Natural killer cell (primary cell): ENCODE measurements at regions of chr3 and their contacts with region 1.

Region 1: GRCh38 chr3:57675530-57675929 is 17.3 kb downstream of the DENND6A start:
- DNase-seq: no peak
- ATAC-seq: peak; percentile 54 to 65 (median 58)
- H3K4me3 ChIP-seq: no peak overlapping the region
- H3K4me3 Mint-ChIP-seq: peak overlapping the region; percentile 75
- H3K27ac ChIP-seq: peak overlapping the region; percentile 43
- H3K27ac Mint-ChIP-seq: peak overlapping the region; percentile 85 to 87
- H3K4me1 ChIP-seq: peaks cover 40% of the 10 kb centered on the region
- H3K4me1 Mint-ChIP-seq: peaks cover 68 to 70% of the 10 kb centered on the region in 2 donors
- H3K27me3 ChIP-seq: no peaks in the 10 kb centered on the region
- H3K27me3 Mint-ChIP-seq: no peaks in the 10 kb centered on the region
- CTCF ChIP-seq: no peak

Region 2: GRCh38 chr3:56783644-56784447 is 891.7 kb before region 1 on chr3:
- intact Hi-C with region 1: loop called (anchors 10 kb)
- DNase-seq: peak; percentile 62 to 85
- ATAC-seq: peak; percentile 84 to 95 (median 94)
- H3K4me3 ChIP-seq: peak overlapping the region; percentile 2
- H3K4me3 Mint-ChIP-seq: peak overlapping the region; percentile 86
- H3K27ac ChIP-seq: peak overlapping the region; percentile 86
- H3K27ac Mint-ChIP-seq: peak overlapping the region; percentile 85 to 92
- H3K4me1 ChIP-seq: peaks cover 87% of the 10 kb centered on the region
- H3K4me1 Mint-ChIP-seq: peaks cover 95 to 97% of the 10 kb centered on the region in 2 donors
- H3K27me3 ChIP-seq: no peaks in the 10 kb centered on the region
- H3K27me3 Mint-ChIP-seq: no peaks in the 10 kb centered on the region
- CTCF ChIP-seq: no peak

Region 3: GRCh38 chr3:57555738-57556458 is 119.6 kb before region 1 on chr3 and contains the start of gene PDE12:
- intact Hi-C with region 1: loop called (anchors 5 kb)
- DNase-seq: peak; percentile 84 to 90
- ATAC-seq: peak; percentile 78 to 88 (median 82)
- H3K4me3 ChIP-seq: peak within 1 kb of the TSS; percentile 76
- H3K4me3 Mint-ChIP-seq: peak within 1 kb of the TSS; percentile 90
- H3K27ac ChIP-seq: peak within 1 kb of the TSS; percentile 94
- H3K27ac Mint-ChIP-seq: peak within 1 kb of the TSS; percentile 93 to 94
- H3K4me1 ChIP-seq: peaks cover 33% of the 10 kb centered on the region
- H3K4me1 Mint-ChIP-seq: peaks cover 42 to 44% of the 10 kb centered on the region in 2 donors
- H3K27me3 ChIP-seq: no peaks in the 10 kb centered on the region
- H3K27me3 Mint-ChIP-seq: no peaks in the 10 kb centered on the region
- CTCF ChIP-seq: no peak
- total RNA-seq, gene PDE12: 34.4 to 36.6 (median 35.5) TPM

Region 4: DNA sequence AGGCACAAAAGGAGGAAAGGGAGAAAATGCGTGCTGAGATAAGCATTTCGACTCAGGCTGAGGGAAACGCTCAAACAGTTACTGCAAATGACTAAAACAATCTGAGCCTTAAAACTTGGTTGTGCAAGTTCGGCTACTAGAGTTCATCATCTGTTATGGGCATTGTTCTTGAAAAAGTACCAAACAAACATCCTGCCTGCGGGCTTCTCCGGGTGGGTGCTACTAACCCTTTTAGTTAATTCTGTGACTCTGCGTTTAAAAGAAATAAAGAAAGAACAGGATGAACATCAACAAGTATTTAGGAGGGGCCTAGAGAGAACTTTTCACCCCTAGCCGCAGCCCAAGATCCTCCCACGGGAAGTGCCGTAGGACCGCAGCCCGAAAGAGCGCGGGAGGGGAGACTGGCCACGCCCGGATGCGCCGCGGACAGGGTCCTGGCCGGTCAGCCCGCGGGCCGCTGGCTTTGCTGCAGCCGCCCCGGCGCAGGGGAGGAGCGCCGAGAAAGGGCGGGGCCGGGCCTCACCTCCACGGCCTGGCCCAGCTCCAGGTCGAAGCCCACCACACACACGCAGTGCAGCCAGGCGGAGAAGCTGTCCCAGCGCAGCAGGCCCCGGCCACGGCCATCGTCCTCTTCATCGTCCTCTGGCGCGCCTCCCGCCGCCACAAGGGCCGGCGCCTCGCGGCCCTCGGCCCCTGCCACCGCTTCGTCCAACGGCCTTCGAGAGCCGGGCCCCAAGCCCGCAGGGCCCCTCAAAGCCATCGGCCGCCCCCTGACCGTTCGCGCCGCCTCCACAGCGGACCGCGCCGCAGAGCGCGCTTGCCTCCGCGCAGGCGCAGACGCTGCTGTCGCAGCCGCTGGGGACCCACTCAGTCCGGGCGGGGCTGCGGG is 17.0 kb after region 1 on chr3 and contains the start of gene DENND6A:
- intact Hi-C with region 1: loop called (anchors 1 kb)
- DNase-seq: peak; percentile 93 to 98
- ATAC-seq: peak; percentile 76 to 90 (median 80)
- H3K4me3 ChIP-seq: peak within 1 kb of the TSS; percentile 60
- H3K4me3 Mint-ChIP-seq: peak within 1 kb of the TSS; percentile 95
- H3K27ac ChIP-seq: peak within 1 kb of the TSS; percentile 88
- H3K27ac Mint-ChIP-seq: peak within 1 kb of the TSS; percentile 94 to 97
- H3K4me1 ChIP-seq: peaks cover 40% of the 10 kb centered on the region
- H3K4me1 Mint-ChIP-seq: peaks cover 22 to 38% of the 10 kb centered on the region in 2 donors
- H3K27me3 ChIP-seq: no peaks in the 10 kb centered on the region
- H3K27me3 Mint-ChIP-seq: no peaks in the 10 kb centered on the region
- CTCF ChIP-seq: no peak
- total RNA-seq, gene DENND6A: 54.5 to 69.8 (median 57.1) TPM

Region 5: DNA sequence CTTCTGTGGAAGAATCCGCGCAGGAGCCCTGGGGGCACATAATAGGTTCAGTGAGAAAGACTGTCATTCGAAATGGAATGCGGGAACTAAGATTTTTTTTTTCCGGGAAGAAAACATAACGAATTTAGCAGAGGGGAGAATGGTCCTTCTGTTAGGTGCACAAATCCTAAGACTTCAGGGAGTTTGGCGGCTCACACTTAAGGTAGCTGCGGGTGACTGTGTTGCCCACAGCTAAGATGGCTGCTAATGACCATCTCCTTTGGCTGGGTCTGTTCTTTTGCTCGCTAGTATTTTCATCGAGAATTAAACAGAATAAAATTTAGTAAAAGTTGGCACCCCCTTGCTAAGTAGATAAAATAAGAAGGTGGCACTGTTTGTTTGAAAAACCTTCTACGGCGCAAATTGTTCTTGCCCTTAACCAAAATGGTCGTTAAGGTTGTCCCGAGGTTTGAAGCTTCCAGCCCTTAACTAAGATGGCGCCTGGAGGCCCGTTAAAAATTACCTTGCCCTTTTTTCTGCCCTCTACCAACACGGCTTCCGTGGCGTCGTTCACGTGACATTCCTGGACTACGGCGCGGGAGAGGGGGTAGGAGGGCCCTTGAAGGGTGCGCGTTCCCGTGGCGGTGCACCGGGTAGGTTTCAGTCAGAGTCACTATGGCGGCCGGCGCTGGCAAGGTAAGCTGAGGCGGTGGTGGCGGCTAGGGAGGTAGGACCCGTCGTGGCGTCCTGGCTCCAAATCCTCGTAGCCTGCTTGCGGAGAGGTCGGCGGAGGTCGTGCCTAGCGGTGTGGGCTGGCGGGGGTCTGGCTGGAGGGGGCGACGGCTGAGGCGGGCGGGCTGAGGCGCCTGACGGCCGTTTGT is 80.4 kb after region 1 on chr3 and contains the start of gene SLMAP:
- intact Hi-C with region 1: loop called (anchors 2 kb)
- DNase-seq: peak; percentile 91 to 98
- ATAC-seq: peak; percentile 92 to 98 (median 93)
- H3K4me3 ChIP-seq: peak within 1 kb of the TSS; percentile 81
- H3K4me3 Mint-ChIP-seq: peak within 1 kb of the TSS; percentile 97
- H3K27ac ChIP-seq: peak within 1 kb of the TSS; percentile 79
- H3K27ac Mint-ChIP-seq: peak within 1 kb of the TSS; percentile 89 to 91
- H3K4me1 ChIP-seq: peaks cover 26% of the 10 kb centered on the region
- H3K4me1 Mint-ChIP-seq: peaks cover 27 to 28% of the 10 kb centered on the region in 2 donors
- H3K27me3 ChIP-seq: no peaks in the 10 kb centered on the region
- H3K27me3 Mint-ChIP-seq: no peaks in the 10 kb centered on the region
- CTCF ChIP-seq: no peak
- total RNA-seq, gene SLMAP: 79.4 to 98.6 (median 89.0) TPM